ENCODE measurements at regions of chr3 and their contacts with region 1.

Region 1: GRCh38 chr3:52339612-52340011 is 23.5 kb downstream of the DNAH1 start:
- DNase-seq: no peak
- H3K4me3 ChIP-seq: no peak overlapping the region
- H3K27ac ChIP-seq: no peak overlapping the region
- H3K4me1 ChIP-seq: no peaks in the 10 kb centered on the region
- H3K27me3 ChIP-seq: no peaks in the 10 kb centered on the region
- CTCF ChIP-seq: peak; percentile 77

Region 2: GRCh38 chr3:52225452-52226228 is 114.0 kb before region 1 on chr3 and contains the start of gene TLR9:
- intact Hi-C with region 1: loop called (anchors 5 kb)
- DNase-seq: no peak
- H3K4me3 ChIP-seq: no peak within 1 kb of the TSS
- H3K27ac ChIP-seq: no peak within 1 kb of the TSS
- H3K4me1 ChIP-seq: peaks cover 9% of the 10 kb centered on the region
- H3K27me3 ChIP-seq: no peaks in the 10 kb centered on the region
- CTCF ChIP-seq: no peak
- total RNA-seq, gene TLR9: 0.66 TPM

Region 3: GRCh38 chr3:54294214-54294613 is 1954.6 kb after region 1 on chr3:
- intact Hi-C with region 1: no loop called
- DNase-seq: no peak
- H3K4me3 ChIP-seq: no peak overlapping the region
- H3K27ac ChIP-seq: no peak overlapping the region
- H3K4me1 ChIP-seq: no peaks in the 10 kb centered on the region
- H3K27me3 ChIP-seq: no peaks in the 10 kb centered on the region
- CTCF ChIP-seq: no peak

Measured in left ventricle myocardium inferior (tissue), 1 donor.